Posterior vena cava (tissue), 2 donors: ENCODE measurements at regions of chr19 and their contacts with region 1.

Region 1: GRCh38 chr19:35931161-35931873 is 4.9 kb upstream of the LRFN3 start:
- DNase-seq: peak; percentile 100

Region 2: DNA sequence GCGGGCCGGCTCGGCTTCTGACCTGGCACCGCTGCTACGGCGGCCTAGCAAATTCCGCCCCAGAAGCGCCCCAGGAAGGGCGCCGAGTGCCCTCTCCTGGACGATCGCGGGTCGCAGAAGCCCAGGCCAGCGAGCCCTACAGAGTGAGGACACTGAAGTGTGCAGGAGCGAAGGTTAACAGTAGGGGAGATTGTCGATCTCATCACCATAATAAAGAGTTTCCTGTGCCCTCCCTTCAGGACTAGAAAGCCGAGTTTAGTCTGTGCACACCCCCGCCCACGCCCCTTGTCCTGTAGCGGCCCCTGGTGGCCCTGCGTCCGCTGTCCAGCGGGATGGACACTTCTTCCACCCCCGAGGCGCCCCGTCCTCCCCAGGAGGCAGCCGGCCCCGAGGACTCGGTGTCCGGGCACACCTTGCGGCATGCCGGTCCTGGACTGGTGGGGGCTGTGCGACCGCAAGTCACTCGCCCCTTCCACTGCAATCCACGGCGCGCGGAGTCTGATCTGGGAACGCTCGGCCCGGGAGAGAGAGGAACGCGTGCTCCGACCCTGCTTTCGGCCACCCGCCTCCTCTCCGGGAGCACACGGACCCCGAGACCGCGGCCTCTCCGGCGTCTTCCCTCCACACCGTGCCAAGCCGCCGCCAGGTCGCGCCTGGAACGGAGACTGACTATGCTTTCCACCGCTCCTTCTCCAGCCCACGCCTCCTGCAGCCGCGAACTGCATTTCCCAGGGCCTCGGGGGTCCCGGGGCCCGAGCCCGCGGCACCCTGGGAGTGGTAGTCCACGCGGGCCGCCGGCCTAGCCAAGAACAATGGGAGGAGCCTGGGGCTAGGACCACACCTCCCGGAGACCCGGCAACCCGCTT is 214.3 kb before region 1 on chr19:
- intact Hi-C with region 1: loop called in 1 of 2 experiments (anchors 10 kb)
- DNase-seq: peak; percentile 98

Region 3: GRCh38 chr19:35740423-35741202 is 190.7 kb before region 1 on chr19:
- intact Hi-C with region 1: loop called in 1 of 2 experiments (anchors 10 kb)
- DNase-seq: peak; percentile 99

Region 4: DNA sequence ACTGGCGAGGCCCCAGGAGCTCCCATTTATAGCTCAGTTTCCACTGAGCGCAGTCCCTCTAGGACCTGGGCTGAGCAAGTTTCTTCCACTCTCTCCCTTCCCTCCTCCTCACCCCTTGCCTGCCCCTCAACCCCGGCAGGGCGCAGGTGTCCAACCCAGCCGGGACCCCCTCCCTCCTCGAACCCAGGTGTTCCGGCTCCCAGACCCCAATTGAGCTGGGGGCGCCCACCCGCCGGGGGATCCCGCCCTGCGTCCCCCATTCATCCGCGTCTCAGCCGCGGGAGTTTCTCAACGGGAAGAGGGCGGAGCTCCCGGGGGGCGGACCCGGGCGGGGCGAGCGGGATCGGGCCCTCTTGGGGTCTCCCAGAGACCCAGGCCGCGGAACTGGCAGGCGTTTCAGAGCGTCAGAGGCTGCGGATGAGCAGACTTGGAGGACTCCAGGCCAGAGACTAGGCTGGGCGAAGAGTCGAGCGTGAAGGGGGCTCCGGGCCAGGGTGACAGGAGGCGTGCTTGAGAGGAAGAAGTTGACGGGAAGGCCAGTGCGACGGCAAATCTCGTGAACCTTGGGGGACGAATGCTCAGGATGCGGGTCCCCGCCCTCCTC is 74.7 kb before region 1 on chr19 and contains the start of gene KIRREL2:
- intact Hi-C with region 1: no loop called
- DNase-seq: no peak
- total RNA-seq, gene KIRREL2: not detected

Region 5: DNA sequence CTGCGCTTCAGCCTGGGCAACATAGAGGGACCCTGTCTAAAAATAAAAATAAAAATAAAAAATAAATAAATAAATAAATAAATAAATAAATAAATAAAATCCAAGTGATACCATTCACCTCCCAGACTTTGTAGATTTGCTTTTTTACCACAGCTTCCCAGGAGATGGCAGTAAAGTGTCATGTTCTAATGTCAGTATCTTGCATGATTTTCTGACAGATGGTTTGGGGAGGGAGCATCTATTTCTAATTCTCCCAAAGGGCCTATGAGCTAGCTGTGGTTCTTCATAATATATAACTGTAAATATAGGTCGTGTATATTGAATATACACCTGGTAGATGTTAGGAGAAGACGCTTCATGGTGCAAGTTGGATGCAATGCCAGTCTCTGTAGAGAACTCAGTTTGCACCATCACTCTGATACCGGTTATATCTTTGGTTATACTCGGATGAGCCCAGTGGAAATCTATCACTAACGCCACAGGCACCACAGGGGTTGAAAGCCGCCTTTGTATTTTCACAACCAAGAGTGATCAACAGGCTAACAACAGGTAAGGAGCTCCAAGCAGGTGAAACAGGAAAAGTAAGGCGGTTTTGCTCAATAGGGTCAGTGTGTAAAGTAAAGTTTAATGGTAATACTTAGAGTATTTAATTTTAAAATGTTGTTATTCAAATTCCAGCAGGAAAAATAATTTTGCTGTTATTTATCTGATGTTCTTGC is 49.0 kb before region 1 on chr19:
- intact Hi-C with region 1: loop called in 1 of 2 experiments (anchors 5 kb)
- DNase-seq: no peak